Dendritic cell treated with granulocyte-macrophage colony-stimulating factor and Interleukin-4, amounts not matched to agents 40 ng/mL and 50 ng/mL, for 4 days (primary cell): ENCODE measurements at regions of chr9 and their contacts with region 1.

Region 1: DNA sequence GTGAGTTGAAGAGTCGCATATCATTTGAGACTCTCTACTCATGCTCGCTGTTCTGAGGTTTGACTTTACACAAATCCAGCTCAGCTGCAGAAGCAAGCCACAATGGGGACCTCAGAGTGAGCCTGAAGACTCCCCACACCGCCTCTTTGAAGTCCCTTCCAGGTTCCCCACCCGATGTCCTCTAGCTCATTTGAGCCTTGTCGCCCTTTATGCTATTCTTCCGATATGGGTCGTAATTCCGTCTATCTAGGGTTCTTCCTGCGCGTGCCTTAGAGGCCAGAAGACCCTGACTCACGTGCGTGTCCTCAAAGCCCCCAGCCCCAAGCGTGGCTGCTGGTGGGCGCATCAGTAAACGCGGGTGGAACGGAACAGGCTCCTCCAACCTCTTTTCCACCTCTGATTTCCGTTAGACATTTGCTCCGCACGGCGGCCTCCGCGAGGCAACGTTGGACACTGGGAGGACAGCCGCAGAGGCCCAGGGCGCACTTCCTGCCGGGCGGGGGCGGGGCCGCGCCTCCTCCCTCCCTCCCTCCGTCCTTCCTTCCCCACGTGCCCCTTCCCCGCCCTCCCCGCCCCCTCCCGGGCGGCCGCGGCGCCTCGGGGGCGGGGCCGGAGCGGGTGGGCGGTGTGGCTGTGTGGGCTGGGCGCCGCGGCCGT is at the start of gene SNX30:
- H3K4me3 Mint-ChIP-seq: peak within 1 kb of the TSS; percentile 95
- H3K27ac Mint-ChIP-seq: peak within 1 kb of the TSS; percentile 98
- H3K4me1 Mint-ChIP-seq: peaks cover 53% of the 10 kb centered on the region
- H3K27me3 Mint-ChIP-seq: no peaks in the 10 kb centered on the region

Region 2: DNA sequence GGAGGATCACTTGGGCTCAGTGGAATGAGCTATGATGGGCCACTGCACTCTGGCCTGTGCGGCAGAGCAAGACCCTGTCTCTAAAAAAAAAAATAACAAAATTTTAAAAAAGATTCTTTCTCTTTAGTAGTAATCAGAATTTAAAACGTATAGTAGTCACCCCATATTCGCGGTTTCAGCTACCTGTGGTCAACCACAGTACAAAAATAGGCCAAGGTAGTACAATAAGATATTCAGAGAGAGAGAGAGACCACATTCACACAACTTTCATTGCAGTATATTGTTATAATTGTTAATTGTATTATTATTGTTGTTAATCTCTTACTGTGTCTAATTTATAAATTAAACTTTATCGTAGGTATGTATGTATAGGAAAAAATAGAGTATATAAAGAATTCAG is 51.0 kb before region 1 on chr9:
- intact Hi-C with region 1: no loop called
- H3K4me3 Mint-ChIP-seq: no peak overlapping the region
- H3K27ac Mint-ChIP-seq: no peak overlapping the region
- H3K4me1 Mint-ChIP-seq: peaks cover 17% of the 10 kb centered on the region
- H3K27me3 Mint-ChIP-seq: no peaks in the 10 kb centered on the region

Region 3: DNA sequence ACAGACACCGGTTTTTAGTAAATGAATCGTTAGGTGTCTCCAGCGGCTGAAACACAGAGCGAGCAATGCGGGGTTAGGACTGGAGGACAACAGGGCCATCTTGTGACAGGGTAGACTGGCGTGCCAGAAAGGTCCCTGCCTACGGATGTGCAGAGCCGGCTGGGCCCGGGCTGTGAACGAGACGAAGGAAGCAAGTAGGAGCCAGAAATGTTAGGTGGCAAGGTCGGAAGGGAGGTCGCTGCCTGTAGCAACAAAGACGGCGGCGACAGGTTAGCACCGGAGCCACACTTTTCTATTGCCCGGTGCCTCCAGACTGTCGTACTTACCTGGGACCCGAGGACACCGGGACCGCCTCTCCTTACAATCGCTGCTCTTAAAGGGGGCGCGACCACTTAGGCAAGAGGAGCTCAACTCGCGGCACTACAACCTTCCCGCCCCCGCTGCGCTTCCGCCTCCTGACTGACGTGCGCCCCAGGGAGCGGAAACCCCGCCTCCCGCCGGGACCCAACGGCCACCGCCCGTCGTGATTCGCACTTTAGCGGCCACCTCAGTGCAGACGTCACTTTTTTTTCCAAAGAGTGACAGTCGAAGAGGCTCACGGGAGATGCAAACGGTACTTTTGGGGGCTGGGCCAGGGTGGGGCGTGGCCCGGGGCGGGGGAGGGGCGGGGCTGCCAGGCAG is 32.4 kb before region 1 on chr9 and contains the start of gene INIP:
- intact Hi-C with region 1: loop called (anchors 1 kb)
- H3K4me3 Mint-ChIP-seq: peak within 1 kb of the TSS; percentile 93
- H3K27ac Mint-ChIP-seq: peak within 1 kb of the TSS; percentile 92
- H3K4me1 Mint-ChIP-seq: peaks cover 25% of the 10 kb centered on the region
- H3K27me3 Mint-ChIP-seq: no peaks in the 10 kb centered on the region

Region 4: DNA sequence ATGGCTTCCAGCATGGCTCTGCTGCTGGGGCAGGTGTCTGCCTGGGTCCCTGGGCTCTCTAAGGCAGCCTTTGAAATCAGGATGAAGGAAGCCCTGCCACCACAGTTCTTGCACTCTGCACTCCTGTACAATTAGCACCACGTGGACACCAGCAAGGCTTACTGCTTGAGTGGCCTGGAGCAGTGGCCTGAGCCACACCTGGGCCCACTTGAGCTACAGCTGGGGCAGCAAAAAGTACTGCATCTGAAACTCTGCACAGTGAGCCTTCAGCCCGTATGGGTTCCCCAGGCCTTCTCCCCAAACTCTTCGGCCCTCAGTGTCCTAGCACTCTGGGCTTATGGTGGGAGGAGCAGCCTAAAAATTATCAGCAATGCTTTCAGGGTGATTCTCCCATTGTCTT is 24.3 kb before region 1 on chr9:
- intact Hi-C with region 1: loop called (anchors 2 kb)
- H3K4me3 Mint-ChIP-seq: no peak overlapping the region
- H3K27ac Mint-ChIP-seq: peak overlapping the region; percentile 27
- H3K4me1 Mint-ChIP-seq: peaks cover 33% of the 10 kb centered on the region
- H3K27me3 Mint-ChIP-seq: no peaks in the 10 kb centered on the region

Region 5: GRCh38 chr9:112774006-112774996 is 24.1 kb after region 1 on chr9:
- intact Hi-C with region 1: no loop called
- H3K4me3 Mint-ChIP-seq: no peak overlapping the region
- H3K27ac Mint-ChIP-seq: no peak overlapping the region
- H3K4me1 Mint-ChIP-seq: peaks cover 73% of the 10 kb centered on the region
- H3K27me3 Mint-ChIP-seq: no peaks in the 10 kb centered on the region

Region 6: GRCh38 chr9:112819635-112820496 is 69.6 kb after region 1 on chr9:
- intact Hi-C with region 1: loop called (anchors 10 kb)
- H3K4me3 Mint-ChIP-seq: no peak overlapping the region
- H3K27ac Mint-ChIP-seq: peak overlapping the region; percentile 65
- H3K4me1 Mint-ChIP-seq: peaks cover 50% of the 10 kb centered on the region
- H3K27me3 Mint-ChIP-seq: no peaks in the 10 kb centered on the region

Region 7: DNA sequence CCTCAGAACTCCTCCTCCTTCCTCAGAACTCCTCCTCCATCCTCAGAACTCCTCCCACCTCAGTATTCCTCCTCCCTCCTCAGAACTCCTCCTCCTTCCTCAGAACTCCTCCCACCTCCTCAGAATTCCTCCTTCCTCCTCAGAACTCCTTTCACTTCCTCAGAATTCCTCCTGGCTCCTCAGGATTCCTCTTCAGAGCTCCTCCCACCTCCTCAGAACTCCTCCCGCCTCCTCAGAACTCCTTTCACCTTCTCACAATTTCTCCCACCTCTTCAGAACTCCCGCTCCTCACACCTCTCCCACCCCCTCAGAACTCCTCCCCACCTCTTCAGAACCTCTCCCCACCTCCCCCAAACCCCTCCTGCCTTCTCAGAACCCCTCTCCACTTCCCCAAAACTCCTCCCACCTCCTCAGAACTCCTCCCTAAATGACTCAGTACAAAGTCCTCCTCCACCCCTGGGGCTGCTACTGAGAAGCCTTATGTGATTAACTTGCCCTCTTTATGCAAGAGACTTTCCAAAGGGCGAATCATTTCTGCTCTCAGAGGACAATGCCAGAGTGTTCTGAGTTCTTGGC is 117.3 kb after region 1 on chr9:
- intact Hi-C with region 1: loop called (anchors 10 kb)
- H3K4me3 Mint-ChIP-seq: peak overlapping the region; percentile 79
- H3K27ac Mint-ChIP-seq: peak overlapping the region; percentile 98
- H3K4me1 Mint-ChIP-seq: peaks cover 99% of the 10 kb centered on the region
- H3K27me3 Mint-ChIP-seq: no peaks in the 10 kb centered on the region

Region 8: DNA sequence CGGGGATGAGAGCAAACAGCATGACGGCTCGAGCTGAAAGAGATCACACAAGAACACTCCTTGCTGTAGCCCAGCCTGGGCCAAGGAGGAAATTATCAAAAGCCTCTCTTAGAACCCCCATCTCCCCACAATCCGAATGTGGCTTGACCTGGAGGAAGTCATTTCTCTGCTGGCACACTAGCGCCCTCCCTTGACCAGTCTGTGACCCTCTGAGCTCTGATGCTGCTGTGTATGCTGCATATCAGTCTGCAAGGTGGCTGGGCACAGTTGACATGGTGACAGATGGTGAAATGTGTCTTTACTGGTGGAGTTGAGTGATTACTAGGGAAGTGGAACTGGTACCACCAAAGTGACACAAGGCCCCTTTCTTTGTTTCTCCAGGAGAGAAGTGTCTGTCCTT is 137.1 kb after region 1 on chr9:
- intact Hi-C with region 1: loop called (anchors 5 kb)
- H3K4me3 Mint-ChIP-seq: no peak overlapping the region
- H3K27ac Mint-ChIP-seq: peak overlapping the region; percentile 11
- H3K4me1 Mint-ChIP-seq: peaks cover 92% of the 10 kb centered on the region
- H3K27me3 Mint-ChIP-seq: peaks cover 8% of the 10 kb centered on the region